A549 (cell line): ENCODE measurements at regions of chr4 and their contacts with region 1.

Region 1: GRCh38 chr4:26459054-26459755 is 31.1 kb downstream of the CCKAR start:
- DNase-seq: peak; percentile 31 to 59
- ATAC-seq: peak; percentile 73 to 74; a peak in 5 of 6 replicates
- H3K4me3 ChIP-seq: no peak overlapping the region
- H3K27ac ChIP-seq: no peak overlapping the region
- H3K4me1 ChIP-seq: no peaks in the 10 kb centered on the region
- CTCF ChIP-seq: peak; percentile 60
- EP300 ChIP-seq: no peak
- POLR2A ChIP-seq: no peak
- RAD21 ChIP-seq: peak; percentile 55 to 60

Region 2: GRCh38 chr4:26206339-26206738 is 252.9 kb before region 1 on chr4:
- CTCF ChIA-PET with region 1: no interaction called
- POLR2A ChIA-PET with region 1: no interaction called
- DNase-seq: no peak
- ATAC-seq: no peak
- H3K4me3 ChIP-seq: no peak overlapping the region
- H3K27ac ChIP-seq: no peak overlapping the region
- H3K4me1 ChIP-seq: no peaks in the 10 kb centered on the region
- CTCF ChIP-seq: no peak
- EP300 ChIP-seq: no peak
- POLR2A ChIP-seq: no peak
- RAD21 ChIP-seq: no peak

Region 3: DNA sequence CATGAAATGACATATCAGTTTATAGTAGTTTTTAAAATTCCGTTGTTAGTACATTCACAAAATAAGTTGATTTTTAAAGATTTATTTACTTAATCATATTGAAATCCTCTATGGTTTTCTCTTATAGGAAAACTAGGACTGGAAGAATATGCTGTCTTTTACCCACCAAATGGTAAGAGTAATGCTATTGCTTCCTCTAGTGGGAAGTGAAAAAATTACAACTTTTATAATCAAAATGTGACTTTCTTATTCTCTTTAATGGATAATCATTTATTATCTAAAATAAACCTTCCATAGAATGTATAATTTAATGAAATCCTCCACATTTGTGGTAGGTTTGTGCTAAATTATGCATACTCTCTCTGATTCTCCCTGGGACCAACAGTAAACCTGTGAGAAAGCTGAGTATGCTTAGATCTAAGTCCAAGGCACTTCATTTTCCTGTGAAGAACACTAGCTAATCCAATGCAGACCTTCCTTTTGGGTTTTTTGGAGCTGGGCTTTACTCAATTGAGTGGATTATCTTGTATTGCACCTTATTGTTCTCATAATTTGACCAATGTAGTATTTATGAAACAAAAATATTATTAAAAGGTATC is 260.8 kb after region 1 on chr4:
- CTCF ChIA-PET with region 1: interaction called, 18 read pairs
- POLR2A ChIA-PET with region 1: no interaction called
- DNase-seq: peak in 1 of 2 experiments; percentile 4
- ATAC-seq: no peak
- H3K4me3 ChIP-seq: no peak overlapping the region
- H3K27ac ChIP-seq: no peak overlapping the region
- H3K4me1 ChIP-seq: no peaks in the 10 kb centered on the region
- CTCF ChIP-seq: peak; percentile 57
- EP300 ChIP-seq: no peak
- POLR2A ChIP-seq: no peak
- RAD21 ChIP-seq: peak; percentile 74 to 78